Motor neuron (in vitro differentiated cells): ENCODE measurements at regions of chr1 and their contacts with region 1.

Region 1: DNA sequence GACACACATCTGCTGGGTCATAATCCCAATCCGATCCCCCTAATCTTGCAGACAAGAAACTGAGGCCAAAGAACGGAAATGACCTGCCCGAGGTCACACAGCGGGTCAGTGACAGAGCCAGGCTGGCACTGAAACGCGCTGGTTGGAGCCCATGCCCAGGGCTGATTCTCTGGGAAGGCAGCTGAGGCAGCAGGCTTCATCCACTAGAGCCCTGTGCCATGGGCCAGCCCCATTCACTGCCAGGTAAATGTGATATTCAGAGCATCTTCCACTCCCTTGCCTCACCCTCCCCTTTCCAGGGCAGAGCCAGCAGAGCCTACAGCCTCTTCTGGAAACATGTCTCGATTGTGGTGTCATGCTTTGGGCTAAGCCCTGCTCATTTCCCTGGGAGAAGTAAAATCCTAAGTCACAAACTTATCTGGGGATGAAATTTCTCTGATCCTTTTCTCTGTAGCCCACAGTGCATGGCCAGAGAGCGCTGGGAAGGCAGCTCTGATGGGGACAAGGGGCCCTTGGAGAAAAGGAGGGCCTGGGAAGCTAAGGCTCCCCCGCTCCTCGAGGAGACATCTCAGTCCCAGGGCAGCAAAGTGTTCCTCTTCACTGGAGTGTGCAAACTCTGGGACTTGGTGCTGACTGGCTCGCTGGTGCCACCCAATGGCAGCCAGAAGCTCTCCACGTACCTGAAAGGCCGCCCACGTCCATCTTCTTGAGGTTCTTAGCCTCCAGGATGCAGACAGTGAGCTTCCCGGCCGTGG is 110.4 kb downstream of the SYT2 start:
- ATAC-seq: peak; percentile 50 to 97 (median 80)
- H3K4me3 ChIP-seq: no peak overlapping the region
- H3K27ac ChIP-seq: no peak overlapping the region
- H3K4me1 ChIP-seq: no peaks in the 10 kb centered on the region

Region 2: DNA sequence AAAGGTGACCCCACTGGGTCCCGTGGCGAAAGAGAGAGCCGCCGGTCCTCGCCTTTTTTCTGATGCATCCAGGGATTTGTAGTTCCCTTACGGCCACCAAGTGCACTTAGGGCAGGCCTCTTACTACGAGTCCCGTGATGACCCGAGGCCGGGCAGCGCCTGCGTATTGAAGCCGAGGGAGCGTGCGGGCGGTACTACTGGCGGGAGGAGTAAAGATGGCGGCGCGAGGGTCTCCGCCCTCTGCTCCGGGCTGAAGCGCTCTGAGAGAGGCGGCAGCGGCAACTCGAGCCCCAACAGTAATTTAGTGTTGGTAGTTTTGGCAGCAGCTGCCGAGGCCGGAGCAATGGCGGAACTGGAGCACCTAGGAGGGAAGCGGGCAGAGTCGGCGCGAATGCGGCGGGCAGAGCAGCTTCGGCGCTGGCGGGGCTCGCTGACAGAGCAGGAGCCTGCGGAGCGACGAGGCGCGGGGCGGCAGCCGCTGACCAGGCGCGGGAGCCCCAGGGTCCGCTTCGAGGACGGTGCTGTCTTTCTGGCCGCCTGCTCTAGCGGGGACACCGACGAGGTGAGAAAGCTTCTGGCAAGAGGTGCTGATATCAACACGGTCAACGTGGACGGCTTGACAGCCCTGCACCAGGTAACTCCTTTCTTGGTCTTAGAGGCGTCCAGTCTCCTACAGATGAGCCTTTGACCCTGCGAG is 251.2 kb before region 1 on chr1 and contains the start of gene PPP1R12B:
- in situ Hi-C with region 1: loop called in 1 of 9 experiments (anchors 25 kb)
- ATAC-seq: peak; percentile 91 to 99 (median 96)
- H3K4me3 ChIP-seq: peak within 1 kb of the TSS; percentile 66 to 87 (median 76)
- H3K27ac ChIP-seq: peak within 1 kb of the TSS; percentile 73 to 74
- H3K4me1 ChIP-seq: peaks cover 3 to 9% of the 10 kb centered on the region in 2 donors
- total RNA-seq, gene PPP1R12B: 9.7 to 113 (median 18.6) TPM

Region 3: GRCh38 chr1:202501281-202501680 is 98.6 kb before region 1 on chr1:
- in situ Hi-C with region 1: loop called in 1 of 9 experiments (anchors 25 kb)
- ATAC-seq: peak; percentile 24 to 77 (median 60)
- H3K4me3 ChIP-seq: no peak overlapping the region
- H3K27ac ChIP-seq: no peak overlapping the region
- H3K4me1 ChIP-seq: peaks cover 0 to 2% of the 10 kb centered on the region in 2 donors